Pancreas (tissue), 10 donors: ENCODE measurements at regions of chr13 and their contacts with region 1.

Region 1: DNA sequence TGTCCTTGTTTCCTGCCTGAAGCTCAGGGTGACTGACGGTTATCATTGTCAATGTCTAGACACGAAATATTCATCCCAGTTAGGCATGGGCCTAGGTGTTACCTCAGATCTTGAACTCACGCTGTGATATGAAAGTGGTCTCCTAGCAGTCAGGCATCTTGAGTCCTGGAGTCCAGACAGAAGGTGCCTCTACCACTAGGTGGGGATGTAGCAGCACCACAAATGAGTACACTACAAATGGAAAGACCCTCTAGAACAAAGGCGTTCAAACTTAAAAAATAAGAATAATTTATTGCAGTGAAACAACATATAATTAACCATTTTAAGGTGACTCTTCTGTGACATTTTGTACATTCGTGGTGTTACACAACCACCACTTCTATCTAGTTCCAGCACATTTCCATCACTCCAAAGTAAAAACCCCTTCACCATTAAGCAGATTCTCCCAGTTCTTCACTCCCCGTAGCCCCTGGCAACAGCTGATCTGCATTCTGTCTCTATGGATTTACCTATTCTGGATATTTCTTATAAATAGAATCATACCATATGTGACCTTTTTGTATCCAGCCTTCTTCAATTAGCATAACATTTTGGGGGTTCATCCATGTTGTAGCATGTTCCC is 11.9 kb upstream of the FRY start:
- DNase-seq: peak in 2 of 6 donors; percentile 8 to 31
- ATAC-seq: peak in 3 of 4 donors; percentile 76 to 89 (median 77)
- H3K4me3 ChIP-seq: no peak overlapping the region
- H3K27ac ChIP-seq: no peak overlapping the region
- H3K4me1 ChIP-seq: no peaks in the 10 kb centered on the region
- H3K27me3 ChIP-seq: no peaks in the 10 kb centered on the region
- CTCF ChIP-seq: peak; percentile 7 to 59 (median 34)

Region 2: DNA sequence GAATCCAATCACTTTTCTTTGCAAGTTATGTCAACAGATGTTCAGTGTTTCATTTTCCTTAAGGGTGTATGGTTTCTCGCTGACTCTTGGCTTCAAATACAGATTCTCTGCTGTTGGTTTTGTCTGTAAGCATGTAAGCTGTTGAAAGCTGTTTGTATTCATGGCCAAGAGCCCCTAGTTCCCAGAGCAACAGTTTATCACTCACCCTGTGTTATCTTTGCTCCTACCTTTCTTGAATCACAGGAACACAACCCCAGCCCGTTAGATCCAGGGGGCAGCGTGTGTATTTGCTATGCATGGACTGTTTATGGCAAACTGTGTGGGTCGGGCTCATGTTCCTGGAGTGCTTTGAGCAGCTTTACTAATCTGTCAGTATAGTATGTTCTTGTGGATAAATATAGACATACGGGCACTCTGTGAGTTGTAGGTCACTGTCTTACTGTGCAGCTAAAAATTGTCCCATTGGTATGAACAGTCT is 40.7 kb after region 1 on chr13:
- intact Hi-C with region 1: no loop called
- DNase-seq: no peak
- ATAC-seq: peak in 3 of 4 donors; percentile 36 to 39 (median 37)
- H3K4me3 ChIP-seq: no peak overlapping the region
- H3K27ac ChIP-seq: no peak overlapping the region
- H3K4me1 ChIP-seq: peaks cover 0 to 12% (median 6%) of the 10 kb centered on the region in 3 donors
- H3K27me3 ChIP-seq: no peaks in the 10 kb centered on the region
- CTCF ChIP-seq: no peak

Region 3: DNA sequence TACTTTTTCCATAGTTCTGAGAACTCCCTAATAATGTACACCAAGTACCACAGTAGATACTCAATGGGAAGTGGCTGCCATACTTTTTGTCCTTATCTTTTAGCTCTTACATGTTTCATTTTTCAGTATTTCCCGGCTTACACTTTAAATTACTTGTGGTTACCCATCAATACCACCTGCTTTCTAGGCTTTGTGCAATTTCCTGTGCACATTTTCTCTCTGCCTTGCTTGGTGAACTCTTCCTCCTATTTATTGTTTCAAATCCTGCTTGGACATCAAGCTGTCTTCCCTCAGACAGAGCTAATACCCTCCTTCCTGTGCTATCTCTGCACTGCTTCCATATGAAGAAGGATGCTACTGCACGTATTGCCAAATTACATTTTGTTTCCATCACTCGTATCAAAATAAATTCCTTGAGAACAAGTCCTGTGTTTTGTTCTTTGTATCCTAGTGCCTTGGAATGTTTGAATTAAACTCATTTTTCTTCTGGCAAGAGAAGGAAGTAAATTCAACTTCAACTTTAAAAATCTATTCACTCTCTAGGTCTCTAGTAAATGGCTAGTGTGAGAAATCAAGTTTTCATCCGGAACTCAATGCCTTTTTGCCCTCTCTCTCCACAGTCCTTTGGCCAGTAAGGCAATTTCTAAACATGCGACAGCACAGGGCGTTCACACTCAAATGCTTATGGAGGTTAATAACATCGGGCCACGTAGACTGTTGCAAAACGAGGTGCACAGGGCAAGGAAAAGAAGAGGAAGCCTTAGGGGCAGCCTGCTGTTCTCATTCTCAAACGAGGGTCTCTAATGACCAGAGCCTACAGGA is 289.8 kb after region 1 on chr13:
- intact Hi-C with region 1: loop called in 1 of 3 experiments (anchors 10 kb)
- DNase-seq: no peak
- ATAC-seq: peak; percentile 53 to 72 (median 71)
- H3K4me3 ChIP-seq: peak overlapping the region in 2 of 4 donors; percentile 20 to 28
- H3K27ac ChIP-seq: no peak overlapping the region
- H3K4me1 ChIP-seq: peaks cover 0 to 5% (median 0%) of the 10 kb centered on the region in 3 donors
- H3K27me3 ChIP-seq: no peaks in the 10 kb centered on the region
- CTCF ChIP-seq: no peak